ENCODE measurements at regions of chr13 and their contacts with region 1.

Region 1: GRCh38 chr13:108218044-108218974 is at the start of gene ABHD13:
- H3K4me3 Mint-ChIP-seq: peak within 1 kb of the TSS; percentile 100
- H3K27ac Mint-ChIP-seq: peak within 1 kb of the TSS; percentile 100
- H3K4me1 Mint-ChIP-seq: peaks cover 29% of the 10 kb centered on the region
- H3K27me3 Mint-ChIP-seq: no peaks in the 10 kb centered on the region

Region 2: GRCh38 chr13:108200781-108201398 is 17.4 kb before region 1 on chr13:
- intact Hi-C with region 1: no loop called
- H3K4me3 Mint-ChIP-seq: no peak overlapping the region
- H3K27ac Mint-ChIP-seq: no peak overlapping the region
- H3K4me1 Mint-ChIP-seq: no peaks in the 10 kb centered on the region
- H3K27me3 Mint-ChIP-seq: peaks cover 5% of the 10 kb centered on the region

Region 3: DNA sequence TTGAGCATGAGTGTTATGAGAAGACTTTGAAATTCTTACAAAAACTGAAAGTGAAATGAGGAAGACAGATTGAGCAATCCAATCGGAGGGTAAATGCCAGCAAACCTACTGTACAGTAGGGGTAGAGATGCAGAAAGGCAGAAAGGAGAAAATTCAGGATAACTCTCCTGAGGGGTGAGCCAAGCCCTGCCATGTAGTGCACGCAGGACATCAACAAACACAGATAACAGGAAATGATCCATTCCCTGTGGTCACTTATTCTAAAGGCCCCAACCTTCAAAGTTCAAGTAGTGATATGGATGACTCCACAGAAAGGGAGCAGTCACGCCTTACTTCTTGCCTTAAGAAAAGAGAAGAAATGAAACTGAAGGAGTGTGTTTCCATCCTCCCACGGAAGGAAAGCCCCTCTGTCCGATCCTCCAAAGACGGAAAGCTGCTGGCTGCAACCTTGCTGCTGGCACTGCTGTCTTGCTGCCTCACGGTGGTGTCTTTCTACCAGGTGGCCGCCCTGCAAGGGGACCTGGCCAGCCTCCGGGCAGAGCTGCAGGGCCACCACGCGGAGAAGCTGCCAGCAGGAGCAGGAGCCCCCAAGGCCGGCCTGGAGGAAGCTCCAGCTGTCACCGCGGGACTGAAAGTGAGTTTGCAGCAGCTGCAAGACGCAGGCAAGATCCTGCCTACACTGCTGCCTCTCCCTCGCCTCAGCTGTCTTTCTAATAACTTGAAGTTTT is 51.5 kb after region 1 on chr13 and contains the start of gene TNFSF13B:
- intact Hi-C with region 1: loop called (anchors 5 kb)
- H3K4me3 Mint-ChIP-seq: peak within 1 kb of the TSS; percentile 86
- H3K27ac Mint-ChIP-seq: peak within 1 kb of the TSS; percentile 91
- H3K4me1 Mint-ChIP-seq: peaks cover 41% of the 10 kb centered on the region
- H3K27me3 Mint-ChIP-seq: no peaks in the 10 kb centered on the region

Region 4: GRCh38 chr13:108342369-108343289 is 124.3 kb after region 1 on chr13:
- intact Hi-C with region 1: no loop called
- H3K4me3 Mint-ChIP-seq: peak overlapping the region; percentile 17
- H3K27ac Mint-ChIP-seq: peak overlapping the region; percentile 63
- H3K4me1 Mint-ChIP-seq: peaks cover 7% of the 10 kb centered on the region
- H3K27me3 Mint-ChIP-seq: no peaks in the 10 kb centered on the region

Region 5: GRCh38 chr13:108368250-108368905 is 150.1 kb after region 1 on chr13:
- intact Hi-C with region 1: loop called (anchors 2 kb)
- H3K4me3 Mint-ChIP-seq: peak overlapping the region; percentile 21
- H3K27ac Mint-ChIP-seq: peak overlapping the region; percentile 85
- H3K4me1 Mint-ChIP-seq: peaks cover 30% of the 10 kb centered on the region
- H3K27me3 Mint-ChIP-seq: no peaks in the 10 kb centered on the region

Region 6: GRCh38 chr13:108609353-108609752 is 391.0 kb after region 1 on chr13:
- intact Hi-C with region 1: no loop called
- H3K4me3 Mint-ChIP-seq: no peak overlapping the region
- H3K27ac Mint-ChIP-seq: no peak overlapping the region
- H3K4me1 Mint-ChIP-seq: no peaks in the 10 kb centered on the region
- H3K27me3 Mint-ChIP-seq: no peaks in the 10 kb centered on the region

Measured in dendritic cell treated with granulocyte-macrophage colony-stimulating factor and Interleukin-4, amounts not matched to agents 40 ng/mL and 50 ng/mL, for 4 days (primary cell).